Posterior vena cava (tissue), 2 donors: ENCODE measurements at regions of chr14 and their contacts with region 1.

Region 1: DNA sequence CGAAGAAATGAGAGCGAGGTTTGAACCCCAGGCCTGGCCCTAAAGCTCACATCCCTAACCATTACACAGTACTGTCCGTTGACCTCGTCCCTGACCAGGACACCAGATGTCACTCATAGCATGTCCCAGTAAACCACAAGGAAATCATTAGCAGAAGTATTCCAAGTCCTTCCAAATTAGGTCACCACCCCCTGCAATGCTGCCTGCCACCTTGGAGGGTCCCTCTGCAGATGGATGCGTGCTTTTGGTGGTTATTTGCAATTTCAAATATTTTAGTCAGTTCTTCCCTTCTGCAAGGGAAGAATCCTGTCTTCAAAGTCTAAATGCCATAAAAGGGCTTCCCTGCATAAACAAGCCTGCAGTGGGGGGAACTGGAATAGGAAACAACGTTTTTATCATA is 71.3 kb downstream of the CLMN start:
- DNase-seq: no peak

Region 2: DNA sequence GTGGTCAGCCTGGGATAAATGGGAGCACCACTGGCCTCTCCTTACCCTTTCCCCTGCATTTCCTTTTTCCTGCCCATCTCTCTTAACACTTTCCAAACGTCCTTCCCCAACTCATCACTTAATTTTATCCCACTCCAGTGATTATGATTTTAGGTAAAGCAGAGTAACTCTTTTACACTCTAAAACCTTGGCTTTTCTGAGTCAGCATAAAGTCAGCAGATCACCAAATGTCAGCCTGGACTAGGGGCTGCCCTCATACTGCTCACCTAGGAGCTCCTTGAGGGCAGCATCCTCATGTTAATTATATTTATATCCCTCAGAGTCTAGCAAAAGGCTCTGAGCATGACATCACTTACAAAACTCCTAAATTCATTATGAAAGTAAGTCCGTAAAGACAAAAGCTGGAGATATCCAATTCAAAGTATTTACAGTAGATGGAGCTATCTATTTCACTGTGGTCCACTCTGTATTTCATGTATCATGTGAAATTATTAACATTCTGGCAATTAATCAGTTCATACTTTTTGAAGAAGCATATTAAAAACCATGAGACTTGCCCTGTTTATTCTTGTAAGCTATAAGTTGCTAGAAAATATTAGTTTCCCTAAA is 74.1 kb before region 1 on chr14:
- intact Hi-C with region 1: no loop called
- DNase-seq: no peak

Region 3: DNA sequence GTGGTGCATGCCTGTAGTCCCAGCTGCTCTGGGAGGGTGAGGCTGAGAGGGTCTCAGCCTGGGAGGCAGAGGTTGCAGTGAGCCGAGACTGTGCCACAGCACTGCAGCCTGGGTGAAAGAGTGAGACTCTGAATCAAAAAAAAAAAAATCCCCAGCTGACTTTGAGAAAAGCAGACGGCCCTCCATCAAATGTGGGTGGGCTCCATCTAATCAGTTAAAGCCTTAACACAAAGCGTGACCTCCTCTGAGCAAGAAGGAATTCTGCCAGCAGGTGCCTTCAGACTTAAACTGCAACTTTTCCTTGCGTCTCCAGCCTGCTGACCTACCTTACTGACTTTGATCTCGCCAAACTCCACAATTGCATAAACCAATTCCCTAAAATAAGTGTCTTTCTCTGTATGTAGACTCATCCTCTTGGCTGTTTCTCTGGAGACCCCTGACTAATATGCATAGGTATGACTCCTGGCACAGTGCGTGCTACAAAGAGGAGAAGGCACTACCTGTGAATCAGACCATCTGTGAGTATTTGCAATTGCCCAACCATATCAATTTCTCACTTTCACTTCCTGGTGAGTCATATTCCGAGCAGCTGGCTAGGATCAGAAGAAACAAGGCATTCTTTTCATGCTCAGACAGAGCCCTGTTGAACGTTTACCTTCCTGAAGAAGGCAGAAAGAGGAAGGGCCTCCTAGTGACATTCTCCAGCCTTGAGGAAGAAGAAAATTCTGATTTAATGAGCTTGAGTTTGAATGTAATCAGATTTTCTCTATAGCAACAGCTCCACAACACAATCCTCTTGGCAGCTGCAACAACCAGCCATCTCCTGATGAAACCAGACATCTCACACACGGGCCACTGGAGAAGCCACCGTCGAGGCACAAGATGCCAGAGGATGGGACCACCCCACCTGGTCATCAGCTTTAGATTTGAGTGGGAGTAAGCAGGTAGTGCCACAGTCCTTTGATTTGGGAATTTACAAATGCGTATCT is 17.0 kb after region 1 on chr14:
- intact Hi-C with region 1: loop called in 1 of 2 experiments (anchors 1 kb)
- DNase-seq: no peak

Region 4: GRCh38 chr14:95282354-95283083 is 34.1 kb after region 1 on chr14:
- intact Hi-C with region 1: no loop called
- DNase-seq: no peak

Region 5: DNA sequence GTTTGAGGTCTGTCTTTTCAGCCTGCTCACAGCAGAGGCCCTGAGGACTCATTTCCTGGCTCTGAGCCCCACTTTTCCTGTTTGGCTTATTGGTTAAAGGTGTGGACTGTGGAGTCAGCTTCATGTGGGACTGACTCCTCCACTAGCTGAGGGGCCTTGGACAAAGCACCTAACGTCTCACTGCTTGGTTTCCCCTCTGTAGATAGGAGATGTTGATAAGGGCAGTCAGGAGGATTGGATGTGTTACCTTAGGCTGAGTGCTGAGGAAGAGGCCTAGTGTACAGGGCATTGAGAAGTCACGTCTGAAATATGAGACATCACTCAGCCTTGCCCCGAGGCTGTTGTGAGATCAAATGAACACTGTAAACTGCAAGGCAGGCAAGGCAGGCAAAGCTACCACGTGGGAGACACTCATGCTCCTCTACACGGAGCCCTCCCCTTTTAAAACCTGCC is 492.6 kb after region 1 on chr14:
- intact Hi-C with region 1: no loop called
- DNase-seq: no peak